ENCODE measurements at regions of chr4 and their contacts with region 1.

Region 1: GRCh38 chr4:102120846-102121245 is 224.4 kb downstream of the SLC39A8 start:
- DNase-seq: no peak
- ATAC-seq: no peak
- H3K4me3 ChIP-seq: no peak overlapping the region
- H3K27ac ChIP-seq: no peak overlapping the region
- H3K4me1 ChIP-seq: no peaks in the 10 kb centered on the region
- H3K27me3 ChIP-seq: no peaks in the 10 kb centered on the region
- CTCF ChIP-seq: no peak
- EP300 ChIP-seq: no peak
- POLR2A ChIP-seq: no peak
- RAD21 ChIP-seq: no peak

Region 2: DNA sequence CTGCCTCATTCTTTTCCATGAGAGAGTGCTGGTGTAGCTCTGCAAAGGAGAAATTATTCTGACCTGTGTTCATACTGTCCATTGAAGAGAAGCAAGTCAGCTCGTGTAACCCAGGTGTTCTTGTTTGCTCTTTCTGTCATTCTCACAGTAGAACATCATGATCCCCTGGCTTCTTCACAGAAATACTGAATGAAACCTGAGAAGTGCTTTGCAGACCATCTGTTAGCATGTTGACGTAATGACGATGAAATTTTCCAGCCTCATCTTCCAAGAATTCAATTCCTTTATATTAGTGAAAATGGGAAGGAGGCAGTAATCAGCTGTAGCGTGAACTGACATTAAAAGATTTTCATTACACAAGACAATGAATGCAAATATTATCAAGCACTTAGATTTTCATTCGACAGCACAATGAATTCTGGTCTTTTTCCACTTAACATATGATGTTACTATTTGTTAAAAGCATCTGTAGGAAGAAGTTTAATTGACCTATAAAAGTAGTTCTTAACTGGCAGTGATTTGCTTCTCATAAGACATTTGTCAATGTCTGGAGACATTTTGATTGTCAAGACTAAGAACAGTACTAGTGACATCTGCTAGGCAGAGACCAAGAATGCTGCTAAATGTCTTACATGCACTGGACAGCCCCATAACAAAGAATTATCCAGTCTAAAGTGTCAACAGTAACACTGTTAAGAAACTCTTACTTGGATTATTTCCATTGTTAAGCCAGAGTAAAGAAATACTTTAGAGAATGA is 84.0 kb before region 1 on chr4:
- CTCF ChIA-PET with region 1: no interaction called
- POLR2A ChIA-PET with region 1: no interaction called
- in situ Hi-C with region 1: no loop called
- intact Hi-C with region 1: no loop called
- DNase-seq: no peak
- ATAC-seq: no peak
- H3K4me3 ChIP-seq: no peak overlapping the region
- H3K27ac ChIP-seq: no peak overlapping the region
- H3K4me1 ChIP-seq: no peaks in the 10 kb centered on the region
- H3K27me3 ChIP-seq: no peaks in the 10 kb centered on the region
- CTCF ChIP-seq: no peak
- EP300 ChIP-seq: no peak
- POLR2A ChIP-seq: no peak
- RAD21 ChIP-seq: no peak

Region 3: DNA sequence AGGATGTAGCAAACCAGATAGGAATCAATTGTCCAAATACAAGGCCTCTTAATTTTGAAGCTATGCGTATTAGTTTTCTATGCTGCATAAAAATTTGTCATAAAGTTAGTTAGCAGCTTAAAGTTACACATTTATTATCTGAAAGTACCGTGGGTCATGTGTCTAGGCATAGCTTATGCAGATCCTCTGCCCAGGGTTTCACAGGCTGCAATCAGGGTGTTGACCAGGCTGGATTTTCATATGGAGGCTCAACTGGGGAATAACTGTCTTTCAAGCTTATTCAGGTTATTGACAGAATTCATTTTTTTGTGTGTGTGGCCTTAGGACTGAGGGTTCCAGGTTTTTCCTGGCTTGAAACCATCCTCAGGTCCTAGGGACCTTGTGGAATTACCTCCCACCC is 40.7 kb before region 1 on chr4:
- CTCF ChIA-PET with region 1: no interaction called
- POLR2A ChIA-PET with region 1: no interaction called
- in situ Hi-C with region 1: no loop called
- intact Hi-C with region 1: loop called (anchors 1 kb)
- DNase-seq: no peak
- ATAC-seq: no peak
- H3K4me3 ChIP-seq: no peak overlapping the region
- H3K27ac ChIP-seq: no peak overlapping the region
- H3K4me1 ChIP-seq: no peaks in the 10 kb centered on the region
- H3K27me3 ChIP-seq: no peaks in the 10 kb centered on the region
- CTCF ChIP-seq: no peak
- EP300 ChIP-seq: no peak
- POLR2A ChIP-seq: no peak
- RAD21 ChIP-seq: no peak

Region 4: GRCh38 chr4:102153391-102153790 is 32.5 kb after region 1 on chr4:
- CTCF ChIA-PET with region 1: no interaction called
- POLR2A ChIA-PET with region 1: no interaction called
- in situ Hi-C with region 1: no loop called
- intact Hi-C with region 1: no loop called
- DNase-seq: no peak
- ATAC-seq: no peak
- H3K4me3 ChIP-seq: no peak overlapping the region
- H3K27ac ChIP-seq: no peak overlapping the region
- H3K4me1 ChIP-seq: no peaks in the 10 kb centered on the region
- H3K27me3 ChIP-seq: no peaks in the 10 kb centered on the region
- CTCF ChIP-seq: no peak
- EP300 ChIP-seq: no peak
- POLR2A ChIP-seq: no peak
- RAD21 ChIP-seq: no peak